ENCODE measurements at regions of chr11 and their contacts with region 1.

Region 1: DNA sequence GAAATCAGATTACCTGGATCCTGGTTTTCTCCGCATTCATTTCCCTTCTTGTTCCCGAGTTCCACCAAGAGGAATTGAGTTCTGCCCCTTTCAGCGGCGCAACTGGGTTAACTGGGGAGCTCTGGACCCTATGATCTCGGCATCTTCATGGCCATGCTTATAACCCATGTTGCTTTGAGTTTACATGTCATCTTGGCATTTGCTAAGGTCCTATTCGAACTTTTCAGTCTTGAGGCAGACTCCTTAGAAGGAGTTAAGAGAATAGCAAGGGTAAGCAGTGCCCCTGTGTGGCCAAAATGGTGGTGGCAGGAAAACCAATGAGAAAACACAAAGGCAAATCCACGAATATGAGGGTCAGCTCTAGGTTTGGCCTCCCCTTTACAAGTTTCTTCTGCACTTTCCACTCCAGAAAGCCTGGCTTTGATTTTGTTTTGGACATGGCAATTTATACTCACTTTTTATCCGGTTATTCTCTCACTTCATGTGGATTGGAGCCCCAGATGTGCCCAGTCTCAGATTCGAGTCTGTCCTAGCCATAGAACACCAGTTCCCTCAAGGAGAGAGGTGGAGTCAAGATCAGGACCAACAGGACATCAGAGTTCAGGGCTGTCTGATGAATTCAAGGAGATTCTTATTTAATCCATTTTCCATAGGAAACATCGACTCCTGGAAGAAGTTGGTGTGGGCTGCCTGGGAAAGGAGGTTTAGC is 55.3 kb upstream of the FBXO3 start:
- DNase-seq: peak; percentile 96
- H3K4me3 ChIP-seq: peak overlapping the region; percentile 42
- H3K27ac ChIP-seq: no peak overlapping the region
- H3K4me1 ChIP-seq: peaks cover 4% of the 10 kb centered on the region
- H3K27me3 ChIP-seq: no peaks in the 10 kb centered on the region
- CTCF ChIP-seq: peak; percentile 100

Region 2: GRCh38 chr11:33161120-33162005 is 668.2 kb before region 1 on chr11 and contains the start of gene CSTF3:
- CTCF ChIA-PET with region 1: no interaction called
- POLR2A ChIA-PET with region 1: no interaction called
- intact Hi-C with region 1: loop called (anchors 10 kb)
- DNase-seq: peak; percentile 100
- H3K4me3 ChIP-seq: peak within 1 kb of the TSS; percentile 56
- H3K27ac ChIP-seq: peak within 1 kb of the TSS; percentile 80
- H3K4me1 ChIP-seq: peaks cover 29% of the 10 kb centered on the region
- H3K27me3 ChIP-seq: no peaks in the 10 kb centered on the region
- CTCF ChIP-seq: peak; percentile 55
- total RNA-seq, gene CSTF3: 121 and 125 TPM in 2 replicates

Region 3: DNA sequence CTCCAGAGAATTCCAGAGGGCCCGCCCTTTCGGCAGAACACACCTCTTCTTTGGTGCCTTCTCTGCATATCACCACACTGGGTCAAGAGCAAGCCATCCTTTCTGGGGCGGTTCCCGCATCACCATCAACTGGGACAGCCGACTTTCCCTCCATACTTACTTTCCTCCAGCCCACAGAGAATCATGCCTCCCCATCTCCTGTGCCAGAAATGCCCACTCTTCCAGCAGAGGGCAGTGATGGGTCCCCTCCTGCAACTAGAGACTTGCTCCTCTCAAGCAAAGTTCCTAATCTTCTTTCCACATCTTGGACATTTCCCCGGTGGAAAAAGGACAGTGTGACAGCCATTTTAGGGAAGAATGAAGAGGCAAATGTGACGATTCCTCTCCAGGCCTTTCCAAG is 286.7 kb before region 1 on chr11:
- CTCF ChIA-PET with region 1: interaction called, 3 read pairs
- POLR2A ChIA-PET with region 1: no interaction called
- intact Hi-C with region 1: loop called (anchors 5 kb)
- DNase-seq: peak; percentile 80
- H3K4me3 ChIP-seq: no peak overlapping the region
- H3K27ac ChIP-seq: no peak overlapping the region
- H3K4me1 ChIP-seq: no peaks in the 10 kb centered on the region
- H3K27me3 ChIP-seq: peaks cover 43% of the 10 kb centered on the region
- CTCF ChIP-seq: peak; percentile 94

Region 4: DNA sequence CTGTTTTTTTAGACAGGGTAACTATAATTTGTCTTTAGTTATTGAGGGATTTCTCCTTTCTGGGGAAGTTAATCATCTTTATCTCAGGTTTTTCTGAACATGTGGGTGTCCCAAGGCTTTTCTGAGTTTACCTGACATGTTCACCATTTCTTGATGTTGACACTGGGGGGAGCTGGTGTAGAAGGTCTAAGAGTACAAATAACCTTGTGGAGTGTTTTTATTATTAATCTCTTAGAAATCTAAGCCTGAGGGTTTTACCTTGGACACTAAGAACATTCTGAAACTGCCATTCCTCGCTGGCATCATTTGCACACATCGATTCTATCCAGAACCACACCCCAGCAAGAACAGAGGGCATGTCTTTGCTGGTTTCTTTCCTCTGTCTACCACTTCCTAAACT is 113.4 kb before region 1 on chr11:
- CTCF ChIA-PET with region 1: no interaction called
- POLR2A ChIA-PET with region 1: no interaction called
- intact Hi-C with region 1: loop called (anchors 5 kb)
- DNase-seq: peak; percentile 70
- H3K4me3 ChIP-seq: no peak overlapping the region
- H3K27ac ChIP-seq: no peak overlapping the region
- H3K4me1 ChIP-seq: peaks cover 9% of the 10 kb centered on the region
- H3K27me3 ChIP-seq: no peaks in the 10 kb centered on the region
- CTCF ChIP-seq: peak; percentile 71

Region 5: DNA sequence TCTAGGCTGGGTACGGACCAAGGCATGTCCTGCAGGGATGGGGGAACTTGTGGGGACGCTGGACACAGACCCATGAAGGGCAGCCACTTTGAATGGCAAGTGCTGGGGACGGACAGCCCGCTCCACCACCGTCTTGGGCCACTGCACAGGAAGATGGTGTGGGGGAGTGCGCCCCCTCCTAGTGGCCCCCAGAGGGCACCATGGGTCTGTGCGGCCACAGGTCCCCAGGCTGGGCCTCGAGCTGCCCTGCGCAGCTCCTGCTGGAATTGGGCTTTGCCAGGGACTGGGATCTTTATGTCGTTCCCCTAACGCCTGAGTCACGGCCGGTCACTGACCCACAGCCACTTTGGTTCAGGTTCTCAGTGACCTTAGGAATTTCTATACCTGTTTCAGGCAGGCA is 320.2 kb after region 1 on chr11:
- CTCF ChIA-PET with region 1: no interaction called
- POLR2A ChIA-PET with region 1: no interaction called
- intact Hi-C with region 1: loop called (anchors 10 kb)
- DNase-seq: peak; percentile 57
- H3K4me3 ChIP-seq: no peak overlapping the region
- H3K27ac ChIP-seq: peak overlapping the region; percentile 35
- H3K4me1 ChIP-seq: peaks cover 16% of the 10 kb centered on the region
- H3K27me3 ChIP-seq: no peaks in the 10 kb centered on the region
- CTCF ChIP-seq: peak; percentile 62

Region 6: DNA sequence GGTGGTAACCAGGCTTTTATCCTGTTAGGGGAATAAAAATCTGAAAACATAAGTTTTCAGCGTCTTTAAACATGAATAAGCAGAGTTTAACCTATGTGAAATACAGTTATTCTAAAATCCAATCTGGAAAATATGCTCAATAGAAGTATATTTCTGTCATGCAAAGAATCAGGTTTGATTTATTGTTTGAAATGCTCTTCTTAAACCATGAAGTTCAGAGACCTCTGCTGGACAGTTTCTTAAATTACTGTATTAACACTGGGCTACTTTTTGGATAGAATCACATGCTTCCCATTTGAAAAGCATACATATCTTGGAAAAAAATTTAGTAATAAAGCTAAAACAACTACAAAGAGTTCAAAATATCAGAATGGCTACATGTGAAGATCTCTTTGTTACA is 1061.2 kb after region 1 on chr11:
- CTCF ChIA-PET with region 1: no interaction called
- POLR2A ChIA-PET with region 1: no interaction called
- intact Hi-C with region 1: no loop called
- DNase-seq: peak; percentile 67
- H3K4me3 ChIP-seq: no peak overlapping the region
- H3K27ac ChIP-seq: no peak overlapping the region
- H3K4me1 ChIP-seq: no peaks in the 10 kb centered on the region
- H3K27me3 ChIP-seq: no peaks in the 10 kb centered on the region
- CTCF ChIP-seq: peak; percentile 74

Measured in A673 (cell line).